Left cardiac atrium (tissue), 4 donors: ENCODE measurements at regions of chr12 and their contacts with region 1.

Region 1: DNA sequence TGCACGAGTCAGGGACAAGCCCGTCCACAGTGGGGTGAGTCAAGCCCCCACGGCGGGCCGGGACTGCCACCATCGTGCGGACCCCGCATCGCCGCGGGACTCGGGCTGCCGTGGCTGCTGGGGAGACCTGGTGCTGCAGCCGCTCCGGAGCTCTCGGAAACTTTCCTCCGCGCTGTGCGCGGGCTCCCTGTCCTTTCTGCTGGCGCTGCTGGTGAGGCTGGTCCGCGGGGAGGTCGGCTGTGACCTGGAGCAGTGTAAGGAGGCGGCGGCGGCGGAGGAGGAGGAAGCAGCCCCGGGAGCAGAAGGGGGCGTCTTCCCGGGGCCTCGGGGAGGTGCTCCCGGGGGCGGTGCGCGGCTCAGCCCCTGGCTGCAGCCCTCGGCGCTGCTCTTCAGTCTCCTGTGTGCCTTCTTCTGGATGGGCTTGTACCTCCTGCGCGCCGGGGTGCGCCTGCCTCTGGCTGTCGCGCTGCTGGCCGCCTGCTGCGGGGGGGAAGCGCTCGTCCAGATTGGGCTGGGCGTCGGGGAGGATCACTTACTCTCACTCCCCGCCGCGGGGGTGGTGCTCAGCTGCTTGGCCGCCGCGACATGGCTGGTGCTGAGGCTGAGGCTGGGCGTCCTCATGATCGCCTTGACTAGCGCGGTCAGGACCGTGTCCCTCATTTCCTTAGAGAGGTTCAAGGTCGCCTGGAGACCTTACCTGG is 1.1 kb downstream of the PDE3A start:
- DNase-seq: peak; percentile 88
- ATAC-seq: peak; percentile 81 to 89

Region 2: DNA sequence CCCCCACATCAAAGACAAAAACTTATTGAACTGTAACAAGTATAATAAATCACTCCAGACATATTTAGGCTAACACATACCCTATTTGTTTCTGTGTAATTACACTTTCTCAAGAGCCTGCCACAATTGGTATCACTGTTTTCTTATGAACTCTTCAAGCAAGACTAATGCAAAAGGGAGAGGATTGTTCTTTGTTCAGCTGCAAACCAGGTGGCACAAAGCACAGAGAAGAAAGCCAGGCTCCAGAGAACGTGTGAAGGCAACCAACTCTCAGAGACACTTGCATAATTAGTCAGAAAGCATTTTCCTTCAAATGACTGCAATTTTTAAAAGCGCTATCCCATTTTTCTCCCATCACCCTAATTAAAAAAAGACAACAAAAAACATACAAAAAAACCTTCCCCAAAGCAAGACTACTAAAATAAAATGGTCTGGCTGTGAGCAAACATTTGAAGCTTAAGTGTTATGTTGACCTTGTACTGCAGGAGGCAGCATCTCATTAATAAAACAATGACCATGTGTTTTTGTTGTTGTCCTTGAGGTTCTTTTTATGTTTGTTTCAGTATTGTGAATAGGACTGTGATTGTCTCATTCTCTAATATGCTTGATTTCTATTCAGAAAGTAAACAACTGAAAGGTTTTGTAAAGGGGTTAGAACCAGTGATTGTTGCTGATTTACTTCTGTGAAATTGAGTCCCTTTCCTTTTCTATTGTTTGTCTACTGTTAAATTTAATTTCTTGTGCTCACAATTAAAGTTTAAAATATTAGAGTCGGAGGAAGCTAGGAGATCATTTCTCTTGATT is 453.9 kb before region 1 on chr12:
- intact Hi-C with region 1: loop called in 1 of 2 experiments (anchors 5 kb)
- DNase-seq: no peak
- ATAC-seq: peak; percentile 61 to 68

Region 3: DNA sequence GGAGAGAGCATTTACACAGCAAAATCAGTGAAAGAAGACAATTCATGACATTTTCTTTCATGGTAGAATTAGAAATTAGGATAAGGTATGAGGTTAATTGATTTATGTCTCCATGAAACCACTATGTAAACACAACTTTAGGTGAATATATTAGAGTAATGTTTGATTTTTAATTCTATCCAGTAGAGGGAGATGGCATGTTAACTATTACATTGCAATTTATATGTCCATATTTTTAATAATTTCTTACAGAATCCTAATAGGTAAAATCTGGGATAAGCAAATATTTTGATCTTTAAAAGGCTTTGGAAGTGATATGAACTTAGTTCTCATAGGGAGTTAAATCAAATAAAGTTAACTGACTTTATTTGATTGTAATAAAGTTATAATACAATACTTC is 374.5 kb before region 1 on chr12:
- intact Hi-C with region 1: loop called in 1 of 2 experiments (anchors 5 kb)
- DNase-seq: no peak
- ATAC-seq: no peak

Region 4: GRCh38 chr12:20212658-20213555 is 156.5 kb before region 1 on chr12:
- intact Hi-C with region 1: loop called in 1 of 2 experiments (anchors 5 kb)
- DNase-seq: peak; percentile 89
- ATAC-seq: peak; percentile 98 to 99

Region 5: GRCh38 chr12:20272801-20273200 is 96.7 kb before region 1 on chr12:
- intact Hi-C with region 1: loop called (anchors 5 to 10 kb)
- DNase-seq: no peak
- ATAC-seq: peak; percentile 84 to 85

Region 6: DNA sequence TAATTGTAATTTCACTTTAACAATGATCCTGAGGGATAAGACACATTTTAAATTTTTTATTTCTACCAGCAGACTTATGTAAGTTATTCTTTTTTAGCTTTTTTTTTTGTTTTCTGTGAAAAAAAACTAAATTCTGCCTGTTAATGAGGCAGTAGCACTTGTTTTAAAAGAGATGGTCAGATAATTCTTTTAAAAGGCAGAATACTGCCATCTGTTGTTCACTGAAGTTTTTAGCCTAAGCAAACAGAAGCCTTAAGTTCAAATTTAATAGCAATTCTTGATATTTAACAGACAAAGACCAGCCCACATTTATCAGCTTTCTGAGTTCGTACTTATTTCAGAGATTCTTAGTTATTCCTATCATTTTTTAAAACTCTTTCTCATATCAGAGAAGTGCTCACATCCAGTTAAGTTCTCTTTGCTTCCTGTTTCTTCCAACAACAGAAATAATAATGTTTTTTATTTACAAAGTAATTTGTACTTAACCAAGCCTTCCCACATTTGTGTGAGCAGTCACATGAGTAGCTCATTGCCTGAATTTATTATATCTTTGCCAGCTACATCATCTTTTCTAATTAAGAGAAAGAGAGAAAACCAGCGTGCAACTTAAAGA is 232.3 kb after region 1 on chr12:
- intact Hi-C with region 1: loop called in 1 of 2 experiments (anchors 10 kb)
- DNase-seq: no peak
- ATAC-seq: peak in 1 of 2 donors; percentile 54